Heart right ventricle (tissue), 16 donors: ENCODE measurements at regions of chr3 and their contacts with region 1.

Region 1: GRCh38 chr3:25843332-25843731 is 53.4 kb downstream of the OXSM start:
- DNase-seq: no peak
- ATAC-seq: no peak
- H3K4me3 ChIP-seq: no peak overlapping the region
- H3K27ac ChIP-seq: no peak overlapping the region
- H3K4me1 ChIP-seq: no peaks in the 10 kb centered on the region
- H3K27me3 ChIP-seq: no peaks in the 10 kb centered on the region
- CTCF ChIP-seq: peak in 7 of 9 donors; percentile 27 to 55 (median 29)

Region 2: DNA sequence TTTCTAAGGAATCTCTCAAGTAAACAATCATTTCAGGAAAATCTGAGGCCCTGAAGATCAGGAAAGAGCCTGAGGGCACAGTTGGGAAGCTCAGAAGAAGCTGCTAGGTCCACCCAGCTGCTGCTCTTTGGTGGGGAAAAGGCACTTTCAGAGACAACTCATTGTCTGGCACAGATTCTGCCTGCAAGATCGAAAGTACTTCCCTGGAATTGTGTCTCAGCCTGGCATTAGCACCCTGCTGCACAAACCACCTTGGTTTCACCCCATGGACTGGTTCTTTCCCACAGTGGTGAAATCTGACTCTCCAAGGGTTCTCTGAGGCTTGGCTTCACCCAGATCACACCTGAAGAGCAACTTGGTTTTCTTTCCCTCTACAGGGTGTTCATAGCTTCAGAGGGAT is 1367.4 kb before region 1 on chr3:
- intact Hi-C with region 1: no loop called
- DNase-seq: no peak
- ATAC-seq: no peak
- H3K4me3 ChIP-seq: no peak overlapping the region
- H3K27ac ChIP-seq: no peak overlapping the region
- H3K4me1 ChIP-seq: peaks cover 2 to 29% (median 4%) of the 10 kb centered on the region in 9 donors
- H3K27me3 ChIP-seq: no peaks in the 10 kb centered on the region
- CTCF ChIP-seq: no peak

Region 3: GRCh38 chr3:25897019-25897418 is 53.7 kb after region 1 on chr3:
- intact Hi-C with region 1: no loop called
- DNase-seq: no peak
- ATAC-seq: peak in 1 of 8 donors; percentile 50
- H3K4me3 ChIP-seq: no peak overlapping the region
- H3K27ac ChIP-seq: no peak overlapping the region
- H3K4me1 ChIP-seq: no peaks in the 10 kb centered on the region
- H3K27me3 ChIP-seq: no peaks in the 10 kb centered on the region
- CTCF ChIP-seq: peak in 5 of 9 donors; percentile 31 to 42 (median 35)

Region 4: DNA sequence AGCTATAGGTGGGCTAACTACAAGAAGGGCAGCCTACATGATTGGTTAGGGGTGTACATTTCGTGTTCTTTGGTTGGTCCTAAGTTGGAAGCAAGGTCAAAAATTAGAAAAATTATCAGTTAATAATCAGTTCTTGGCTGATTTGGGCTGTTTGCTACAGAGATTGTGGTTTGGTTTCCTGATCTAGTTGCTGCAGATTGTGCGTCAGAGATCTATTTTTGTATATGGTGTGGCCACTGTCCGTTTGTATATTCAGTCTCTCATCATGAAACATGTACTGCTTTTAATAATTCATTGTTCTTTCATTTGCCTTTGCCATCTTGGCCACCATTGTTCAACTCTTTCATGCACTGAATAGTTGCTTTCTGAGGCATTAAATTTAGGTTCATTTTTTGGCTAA is 860.2 kb after region 1 on chr3:
- intact Hi-C with region 1: loop called in 1 of 10 experiments (anchors 10 kb)
- DNase-seq: no peak
- ATAC-seq: no peak
- H3K4me3 ChIP-seq: no peak overlapping the region
- H3K27ac ChIP-seq: no peak overlapping the region
- H3K4me1 ChIP-seq: no peaks in the 10 kb centered on the region
- H3K27me3 ChIP-seq: no peaks in the 10 kb centered on the region
- CTCF ChIP-seq: no peak